ENCODE measurements at regions of chr17 and their contacts with region 1.

Region 1: DNA sequence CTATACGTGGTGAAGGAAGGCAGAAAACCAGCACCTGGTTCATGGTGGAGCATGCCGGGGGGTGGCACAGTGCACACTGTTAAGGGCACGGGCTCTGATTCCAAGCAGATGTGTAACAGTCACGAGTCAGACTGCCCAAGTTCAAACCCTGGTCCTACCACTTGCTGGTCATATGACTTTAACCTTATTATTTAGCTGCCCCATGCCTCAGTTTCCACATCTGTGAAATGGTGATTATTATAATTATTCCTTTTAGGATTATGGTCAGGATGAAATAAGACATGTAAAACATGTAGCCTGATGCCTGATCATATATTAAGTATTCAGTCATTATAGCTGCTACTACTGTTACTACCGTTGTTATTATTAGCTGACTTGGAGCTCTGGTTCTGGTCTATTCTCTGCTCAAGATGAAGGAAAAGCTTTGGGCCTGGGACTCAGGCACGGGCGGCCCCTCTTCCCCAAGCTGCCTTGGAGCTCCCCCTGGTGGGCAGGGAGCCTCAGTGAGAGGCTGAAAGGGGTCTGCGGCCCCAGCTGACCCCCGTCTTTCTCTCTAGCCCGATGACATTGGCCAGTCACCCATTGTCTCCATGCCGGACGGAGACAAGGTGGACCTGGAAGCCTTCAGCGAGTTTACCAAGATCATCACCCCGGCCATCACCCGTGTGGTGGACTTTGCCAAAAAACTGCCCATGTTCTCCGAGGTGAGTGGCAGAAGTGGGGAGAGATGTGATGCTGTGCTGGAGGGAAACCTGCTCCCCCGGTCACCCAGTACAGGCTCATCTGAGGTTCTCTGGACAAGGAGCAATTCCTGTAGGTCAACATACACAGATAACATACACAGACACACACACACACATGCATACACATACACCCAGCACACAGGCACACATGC is 14.0 kb downstream of the NR1D1 start:
- DNase-seq: peak; percentile 88
- ATAC-seq: peak; percentile 85
- H3K4me3 Mint-ChIP-seq: no peak overlapping the region
- H3K27ac Mint-ChIP-seq: no peak overlapping the region
- H3K4me1 Mint-ChIP-seq: peaks cover 16% of the 10 kb centered on the region
- H3K27me3 Mint-ChIP-seq: no peaks in the 10 kb centered on the region
- CTCF ChIP-seq: peak; percentile 84

Region 2: DNA sequence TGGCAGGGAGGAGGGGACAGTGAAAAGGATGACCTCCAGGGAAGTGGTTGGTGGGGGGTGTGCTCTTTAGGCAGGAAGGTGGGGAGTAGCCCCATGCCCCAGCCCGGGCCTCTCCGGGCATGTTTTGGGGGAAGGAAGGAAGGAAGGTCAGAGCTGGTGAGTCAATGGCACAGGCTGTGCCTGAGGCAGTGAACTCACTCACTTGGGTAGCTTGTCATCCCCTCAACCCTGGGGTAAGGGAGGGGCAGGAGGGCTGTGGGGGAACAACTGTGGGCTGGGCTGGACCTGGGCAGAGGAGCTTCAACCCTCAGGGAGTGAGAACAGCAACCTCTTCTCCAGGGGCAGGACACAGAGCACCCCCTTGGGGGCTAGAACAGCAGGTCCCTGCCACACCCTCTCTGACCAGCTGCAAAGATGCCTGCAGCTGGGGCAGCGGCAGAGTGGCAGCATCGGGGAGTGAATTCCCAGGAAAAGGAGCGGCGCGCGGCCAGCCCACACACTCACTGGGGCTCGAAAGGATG is 64.9 kb before region 1 on chr17:
- CTCF ChIA-PET with region 1: interaction called, 39 read pairs
- POLR2A ChIA-PET with region 1: no interaction called
- DNase-seq: no peak
- ATAC-seq: no peak
- H3K4me3 Mint-ChIP-seq: no peak overlapping the region
- H3K27ac Mint-ChIP-seq: peak overlapping the region; percentile 53; the same call in 1 of the 2 replicates
- H3K4me1 Mint-ChIP-seq: peaks cover 24% of the 10 kb centered on the region
- H3K27me3 Mint-ChIP-seq: no peaks in the 10 kb centered on the region
- CTCF ChIP-seq: no peak

Region 3: DNA sequence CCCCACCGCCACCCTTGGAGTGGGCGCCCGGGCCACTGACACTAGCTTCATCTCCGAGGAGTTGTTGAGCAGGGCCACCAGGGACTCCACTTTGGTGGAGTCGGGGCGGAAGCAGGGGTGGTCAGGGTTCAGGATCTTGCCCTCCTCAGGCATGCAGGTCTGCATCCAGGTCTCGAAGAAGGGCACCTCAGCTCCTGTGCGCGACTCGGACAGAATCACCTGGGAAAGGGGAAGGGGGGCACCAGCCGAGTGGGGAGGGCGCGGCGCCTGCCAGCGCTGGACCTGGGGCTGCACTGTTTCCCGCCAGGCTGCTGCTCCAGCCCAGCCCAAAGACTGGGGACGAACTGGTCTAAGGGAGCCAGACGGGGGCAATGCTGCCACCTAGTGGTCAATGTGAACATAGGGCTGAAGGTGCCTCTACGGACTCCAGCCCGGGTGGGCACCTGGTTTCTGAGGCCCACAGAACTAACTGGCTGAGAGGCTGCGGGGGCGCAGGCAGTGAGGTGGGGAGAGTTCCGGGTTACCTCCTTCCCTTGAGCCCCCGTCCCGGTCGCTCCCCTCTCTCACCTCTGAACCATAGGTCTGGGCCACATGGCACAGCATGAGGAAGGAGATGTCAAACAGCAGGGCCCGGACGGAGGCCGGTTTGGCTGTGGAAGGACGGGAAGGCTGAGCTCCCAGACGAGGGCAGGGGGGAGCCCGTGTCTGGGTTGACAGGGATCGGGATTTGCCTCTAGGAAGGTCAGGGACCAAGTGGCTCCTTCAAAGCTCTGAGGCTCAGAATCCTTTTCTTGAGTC is 59.4 kb before region 1 on chr17:
- CTCF ChIA-PET with region 1: interaction called, 20 read pairs
- POLR2A ChIA-PET with region 1: no interaction called
- DNase-seq: peak; percentile 93
- ATAC-seq: peak; percentile 99
- H3K4me3 Mint-ChIP-seq: no peak overlapping the region
- H3K27ac Mint-ChIP-seq: no peak overlapping the region
- H3K4me1 Mint-ChIP-seq: no peaks in the 10 kb centered on the region
- H3K27me3 Mint-ChIP-seq: no peaks in the 10 kb centered on the region
- CTCF ChIP-seq: peak; percentile 95

Region 4: GRCh38 chr17:40062329-40063186 is 23.8 kb before region 1 on chr17 and contains the start of gene THRA:
- CTCF ChIA-PET with region 1: interaction called, 68 read pairs
- POLR2A ChIA-PET with region 1: interaction called, 5 read pairs
- DNase-seq: peak; percentile 53
- ATAC-seq: peak; percentile 64
- H3K4me3 Mint-ChIP-seq: peak within 1 kb of the TSS; percentile 86
- H3K27ac Mint-ChIP-seq: no peak within 1 kb of the TSS
- H3K4me1 Mint-ChIP-seq: peaks cover 62% of the 10 kb centered on the region
- H3K27me3 Mint-ChIP-seq: peaks cover 32% of the 10 kb centered on the region
- CTCF ChIP-seq: no peak
- total RNA-seq, gene THRA: 11.9 to 15.9 TPM (median 12.0 TPM) in 3 replicates

Region 5: GRCh38 chr17:40068917-40069750 is 17.3 kb before region 1 on chr17:
- CTCF ChIA-PET with region 1: interaction called, 111 read pairs
- POLR2A ChIA-PET with region 1: interaction called, 5 read pairs
- DNase-seq: no peak
- ATAC-seq: peak; percentile 4
- H3K4me3 Mint-ChIP-seq: peak overlapping the region; percentile 53
- H3K27ac Mint-ChIP-seq: peak overlapping the region; percentile 29; the same call in 1 of the 2 replicates
- H3K4me1 Mint-ChIP-seq: peaks cover 75% of the 10 kb centered on the region
- H3K27me3 Mint-ChIP-seq: peaks cover 7% of the 10 kb centered on the region
- CTCF ChIP-seq: no peak

Region 6: GRCh38 chr17:40098846-40099618 is 12.6 kb after region 1 on chr17:
- CTCF ChIA-PET with region 1: interaction called, 28 read pairs
- POLR2A ChIA-PET with region 1: interaction called, 4 read pairs
- DNase-seq: peak; percentile 99
- ATAC-seq: peak; percentile 79
- H3K4me3 Mint-ChIP-seq: peak overlapping the region; percentile 79
- H3K27ac Mint-ChIP-seq: peak overlapping the region; percentile 44
- H3K4me1 Mint-ChIP-seq: peaks cover 51% of the 10 kb centered on the region
- H3K27me3 Mint-ChIP-seq: peaks cover 47% of the 10 kb centered on the region
- CTCF ChIP-seq: no peak

Region 7: DNA sequence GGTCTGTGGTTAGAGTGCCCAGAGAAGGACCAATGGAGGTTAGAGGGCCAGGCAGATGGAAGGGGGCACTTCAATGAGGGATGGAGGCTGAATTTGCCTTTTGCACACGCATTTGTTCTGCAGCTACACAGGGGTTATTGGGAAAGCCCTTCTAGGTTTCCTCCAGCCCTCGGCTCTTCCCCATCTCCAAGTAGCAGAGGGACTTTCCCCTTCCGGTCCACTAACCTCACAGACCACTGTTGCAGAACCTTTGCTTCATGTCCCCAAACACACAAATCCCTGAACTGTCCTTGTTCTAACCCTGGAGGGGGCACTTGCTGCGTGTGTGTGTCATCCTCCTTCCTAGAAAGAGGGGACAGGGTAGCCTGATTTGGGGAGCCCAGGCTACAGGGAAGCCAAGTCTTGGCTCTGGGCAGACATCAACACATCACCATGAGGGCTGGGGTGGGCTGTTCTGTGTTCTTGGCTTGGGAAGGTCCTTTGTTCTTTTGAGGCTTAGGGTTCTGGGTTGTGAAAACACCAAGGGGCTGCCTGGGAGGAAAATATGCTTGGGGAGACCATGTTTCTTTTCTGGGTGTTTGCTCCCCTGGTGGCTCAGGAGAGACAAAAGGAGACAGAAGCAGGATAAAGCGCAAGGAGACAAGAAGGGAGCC is 21.3 kb after region 1 on chr17:
- CTCF ChIA-PET with region 1: interaction called, 65 read pairs
- POLR2A ChIA-PET with region 1: no interaction called
- DNase-seq: no peak
- ATAC-seq: no peak
- H3K4me3 Mint-ChIP-seq: 0 out of 2 replicates have a peak overlapping the region, but pooled peaks have one; percentile 26
- H3K27ac Mint-ChIP-seq: no peak overlapping the region
- H3K4me1 Mint-ChIP-seq: peaks cover 92% of the 10 kb centered on the region
- H3K27me3 Mint-ChIP-seq: peaks cover 53% of the 10 kb centered on the region
- CTCF ChIP-seq: no peak

Measured in WTC11 (cell line).